AG04449 (cell line): ENCODE measurements at regions of chr19 and their contacts with region 1.

Region 1: GRCh38 chr19:40210921-40211320 is 7.3 kb downstream of the TTC9B start:
- DNase-seq: no peak
- H3K4me3 ChIP-seq: no peak overlapping the region
- CTCF ChIP-seq: no peak

Region 2: DNA sequence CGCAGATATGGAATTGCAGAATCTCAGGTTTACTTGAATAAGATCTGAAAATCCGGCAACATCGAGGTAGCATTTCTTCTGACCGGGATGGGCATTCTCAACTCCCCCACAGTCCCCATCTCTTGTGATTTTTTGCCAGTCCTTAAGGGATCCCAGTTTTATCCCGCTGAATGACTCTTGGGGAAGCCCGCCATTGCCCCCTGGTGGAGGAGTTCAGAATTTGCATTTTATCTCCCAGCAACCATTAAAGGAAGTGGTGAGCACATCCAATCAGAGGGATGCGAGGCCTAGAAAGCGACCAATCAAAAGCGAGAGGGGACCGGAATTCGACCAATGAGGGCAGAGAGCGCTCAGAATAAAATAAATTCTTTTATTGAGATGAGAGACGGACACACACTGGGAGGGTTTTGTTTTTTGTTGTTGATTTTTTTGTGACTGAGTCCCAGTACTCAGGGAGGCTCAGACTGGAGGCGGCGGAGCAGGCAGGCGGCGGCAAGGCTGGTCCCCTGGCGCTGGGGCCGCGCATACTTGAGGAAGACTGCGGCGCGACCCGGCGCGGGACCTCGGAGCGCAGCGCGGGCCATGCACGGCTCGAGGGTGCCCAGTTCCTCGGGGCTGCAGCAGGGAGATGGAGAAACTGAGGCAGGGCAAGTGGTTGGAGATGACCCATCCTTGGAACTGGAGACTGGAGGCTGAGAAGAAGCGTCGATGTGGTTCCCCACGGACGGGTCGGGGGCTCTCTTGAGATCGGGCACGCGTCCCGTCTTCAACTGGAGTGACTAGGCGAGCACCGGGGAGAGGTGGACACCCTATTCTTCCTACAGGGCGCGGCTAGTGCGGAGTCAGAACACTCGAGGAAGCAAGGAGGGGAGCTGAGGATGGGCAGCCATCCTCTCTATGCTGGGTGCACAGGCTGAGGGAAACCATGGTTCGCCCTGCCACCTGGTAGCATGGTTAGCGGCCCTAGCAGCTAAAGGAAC is 11.2 kb after region 1 on chr19:
- CTCF ChIA-PET with region 1: interaction called, 10 read pairs
- POLR2A ChIA-PET with region 1: no interaction called
- DNase-seq: peak; percentile 53
- H3K4me3 ChIP-seq: no peak overlapping the region
- CTCF ChIP-seq: peak; percentile 58

Region 3: DNA sequence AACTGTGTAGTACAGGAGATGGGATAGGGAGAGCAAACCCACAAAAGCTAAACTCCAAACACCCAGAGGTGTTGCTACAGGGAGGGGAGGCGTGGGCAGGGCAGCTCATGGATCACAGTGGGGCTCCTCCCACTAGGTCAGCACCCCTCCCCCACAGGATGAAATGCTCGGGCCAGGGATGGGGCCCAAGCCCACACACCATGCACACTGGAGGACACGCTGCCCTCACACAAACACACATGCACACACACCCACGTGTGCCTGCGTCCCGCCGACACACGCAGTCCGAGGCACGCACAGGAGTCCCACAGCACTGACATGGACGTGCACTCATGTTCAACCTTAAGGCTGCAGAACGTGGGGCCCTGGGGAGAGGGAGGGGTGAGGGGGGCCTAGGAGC is 21.6 kb after region 1 on chr19:
- CTCF ChIA-PET with region 1: no interaction called
- POLR2A ChIA-PET with region 1: no interaction called
- DNase-seq: no peak
- H3K4me3 ChIP-seq: no peak overlapping the region
- CTCF ChIP-seq: no peak